ENCODE measurements at regions of chr15 and their contacts with region 1.

Region 1: GRCh38 chr15:93030430-93031105 is 58.4 kb downstream of the RGMA start:
- DNase-seq: peak; percentile 72
- ATAC-seq: peak; percentile 82
- H3K4me3 ChIP-seq: no peak overlapping the region
- H3K4me3 Mint-ChIP-seq: no peak overlapping the region
- H3K27ac ChIP-seq: no peak overlapping the region
- H3K27ac Mint-ChIP-seq: peak overlapping the region; percentile 43
- H3K4me1 ChIP-seq: peaks cover under 1 to 10% of the 10 kb centered on the region in 2 donors
- H3K4me1 Mint-ChIP-seq: peaks cover 18% of the 10 kb centered on the region
- H3K27me3 ChIP-seq: no peaks in the 10 kb centered on the region
- H3K27me3 Mint-ChIP-seq: no peaks in the 10 kb centered on the region
- CTCF ChIP-seq: peak; percentile 84

Region 2: GRCh38 chr15:93018580-93018979 is 12.0 kb before region 1 on chr15:
- CTCF ChIA-PET with region 1: interaction called, 64 read pairs
- POLR2A ChIA-PET with region 1: no interaction called
- intact Hi-C with region 1: no loop called
- DNase-seq: no peak
- ATAC-seq: no peak
- H3K4me3 ChIP-seq: no peak overlapping the region
- H3K4me3 Mint-ChIP-seq: no peak overlapping the region
- H3K27ac ChIP-seq: no peak overlapping the region
- H3K27ac Mint-ChIP-seq: no peak overlapping the region
- H3K4me1 ChIP-seq: no peaks in the 10 kb centered on the region
- H3K4me1 Mint-ChIP-seq: peaks cover 22% of the 10 kb centered on the region
- H3K27me3 ChIP-seq: no peaks in the 10 kb centered on the region
- H3K27me3 Mint-ChIP-seq: no peaks in the 10 kb centered on the region
- CTCF ChIP-seq: no peak

Region 3: GRCh38 chr15:93121973-93122910 is 91.7 kb after region 1 on chr15:
- CTCF ChIA-PET with region 1: no interaction called
- POLR2A ChIA-PET with region 1: no interaction called
- intact Hi-C with region 1: no loop called
- DNase-seq: no peak
- ATAC-seq: no peak
- H3K4me3 ChIP-seq: no peak overlapping the region
- H3K4me3 Mint-ChIP-seq: no peak overlapping the region
- H3K27ac ChIP-seq: no peak overlapping the region
- H3K27ac Mint-ChIP-seq: no peak overlapping the region
- H3K4me1 ChIP-seq: no peaks in the 10 kb centered on the region
- H3K4me1 Mint-ChIP-seq: no peaks in the 10 kb centered on the region
- H3K27me3 ChIP-seq: no peaks in the 10 kb centered on the region
- H3K27me3 Mint-ChIP-seq: peaks cover 21% of the 10 kb centered on the region
- CTCF ChIP-seq: no peak

Region 4: DNA sequence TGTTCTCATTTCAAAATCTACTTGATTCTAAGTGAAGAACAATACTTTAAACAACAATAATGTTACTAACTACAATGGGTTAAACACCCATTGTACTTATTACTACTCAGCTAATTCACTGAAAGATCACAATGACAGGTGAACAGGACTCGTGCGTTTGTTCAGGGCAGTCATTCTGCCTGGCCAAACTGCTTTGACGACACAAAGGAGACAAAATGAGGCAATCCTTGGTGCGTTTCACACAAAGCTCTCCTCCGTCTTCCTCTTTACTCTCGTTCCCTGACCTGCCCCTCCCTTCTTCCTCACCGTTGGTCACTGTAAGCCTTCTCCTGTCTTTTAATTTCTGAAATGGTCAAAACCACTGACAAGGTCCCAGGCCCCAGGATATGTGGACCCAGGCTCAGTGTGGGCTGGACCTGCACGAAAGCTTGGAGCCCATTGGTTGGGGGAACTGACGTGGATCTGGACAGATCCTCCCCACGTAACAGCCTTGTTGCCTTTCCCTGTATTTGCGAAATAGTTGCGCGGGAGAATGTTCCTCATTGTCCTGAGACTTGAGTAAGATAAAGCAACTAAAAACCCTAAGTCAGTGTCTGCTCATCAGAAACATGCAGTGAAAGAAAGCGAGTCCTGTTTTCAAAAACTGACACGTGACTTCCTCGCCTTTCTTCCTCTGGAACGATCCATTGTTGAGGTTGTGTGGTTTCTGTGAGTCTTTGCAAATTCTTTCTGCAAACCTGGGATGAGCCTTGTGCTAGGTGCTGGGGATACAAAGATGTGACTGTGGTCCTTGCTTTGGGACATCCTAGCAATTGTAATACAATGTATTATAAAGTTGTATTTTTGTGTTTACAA is 205.6 kb after region 1 on chr15:
- CTCF ChIA-PET with region 1: no interaction called
- POLR2A ChIA-PET with region 1: no interaction called
- intact Hi-C with region 1: no loop called
- DNase-seq: no peak
- ATAC-seq: no peak
- H3K4me3 ChIP-seq: peak overlapping the region in 1 of 5 experiments; percentile 51
- H3K4me3 Mint-ChIP-seq: peak overlapping the region; percentile 17
- H3K27ac ChIP-seq: no peak overlapping the region
- H3K27ac Mint-ChIP-seq: no peak overlapping the region
- H3K4me1 ChIP-seq: no peaks in the 10 kb centered on the region
- H3K4me1 Mint-ChIP-seq: peaks cover 2% of the 10 kb centered on the region
- H3K27me3 ChIP-seq: no peaks in the 10 kb centered on the region
- H3K27me3 Mint-ChIP-seq: peaks cover 7% of the 10 kb centered on the region
- CTCF ChIP-seq: no peak

Region 5: GRCh38 chr15:94119923-94120775 is 1089.6 kb after region 1 on chr15:
- CTCF ChIA-PET with region 1: interaction called, 5 read pairs
- POLR2A ChIA-PET with region 1: no interaction called
- intact Hi-C with region 1: loop called (anchors 10 kb)
- DNase-seq: peak; percentile 58
- ATAC-seq: peak; percentile 68
- H3K4me3 ChIP-seq: no peak overlapping the region
- H3K4me3 Mint-ChIP-seq: no peak overlapping the region
- H3K27ac ChIP-seq: no peak overlapping the region
- H3K27ac Mint-ChIP-seq: no peak overlapping the region
- H3K4me1 ChIP-seq: no peaks in the 10 kb centered on the region
- H3K4me1 Mint-ChIP-seq: no peaks in the 10 kb centered on the region
- H3K27me3 ChIP-seq: no peaks in the 10 kb centered on the region
- H3K27me3 Mint-ChIP-seq: peaks cover 2% of the 10 kb centered on the region
- CTCF ChIP-seq: peak; percentile 57